ENCODE measurements at regions of chr13 and their contacts with region 1.

Region 1: GRCh38 chr13:23667750-23668149 is 97.5 kb downstream of the TNFRSF19 start:
- DNase-seq: peak in 1 of 2 experiments; percentile 59
- H3K4me3 ChIP-seq: no peak overlapping the region
- H3K27ac ChIP-seq: no peak overlapping the region
- H3K4me1 ChIP-seq: no peaks in the 10 kb centered on the region
- H3K27me3 ChIP-seq: no peaks in the 10 kb centered on the region
- CTCF ChIP-seq: peak; percentile 50 to 65 (median 59)
- EP300 ChIP-seq: no peak
- POLR2A ChIP-seq: no peak
- RAD21 ChIP-seq: peak; percentile 57 to 69

Region 2: GRCh38 chr13:23609414-23609760 is 58.4 kb before region 1 on chr13:
- CTCF ChIA-PET with region 1: no interaction called
- POLR2A ChIA-PET with region 1: no interaction called
- DNase-seq: no peak
- H3K4me3 ChIP-seq: no peak overlapping the region
- H3K27ac ChIP-seq: no peak overlapping the region
- H3K4me1 ChIP-seq: peaks cover 0 to 5% (median 2%) of the 10 kb centered on the region in 4 experiments; a peak in 3 of 7 replicates
- H3K27me3 ChIP-seq: no peaks in the 10 kb centered on the region
- CTCF ChIP-seq: no peak
- EP300 ChIP-seq: no peak
- POLR2A ChIP-seq: no peak
- RAD21 ChIP-seq: no peak

Region 3: DNA sequence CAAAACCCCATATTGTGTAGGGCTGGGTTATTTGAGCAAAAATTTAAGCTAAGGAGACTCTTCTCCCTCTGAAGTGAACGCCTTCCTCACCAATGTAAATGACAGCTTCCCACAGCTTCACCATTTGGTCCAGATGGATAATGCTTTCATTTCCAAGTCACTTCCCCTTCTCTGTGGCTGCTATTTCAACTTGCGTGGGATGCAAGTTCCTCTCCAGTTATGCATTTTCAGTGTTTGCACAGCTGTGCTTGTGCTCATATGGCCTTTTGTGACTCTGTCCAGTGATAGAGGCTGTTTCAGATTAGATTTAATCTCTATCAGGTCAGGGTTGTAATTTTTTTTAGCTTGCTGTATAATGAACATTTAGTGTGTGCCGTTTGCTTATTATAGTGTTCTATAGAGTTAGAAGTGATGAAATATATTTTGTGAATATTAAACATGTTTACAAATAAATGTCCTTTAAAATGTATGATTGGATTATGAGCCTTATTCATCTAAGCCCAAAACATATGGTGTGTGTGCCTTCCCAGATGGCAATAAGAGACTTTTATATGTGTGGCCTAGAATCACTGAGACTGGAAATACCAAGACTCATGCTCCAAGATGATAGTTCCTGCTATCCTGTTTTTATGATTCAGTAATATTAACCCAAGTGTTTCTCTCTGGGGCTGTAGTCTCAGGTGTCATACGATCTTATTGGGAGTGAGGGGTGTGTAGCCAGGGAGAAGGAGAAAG is 10.9 kb before region 1 on chr13:
- CTCF ChIA-PET with region 1: interaction called, 19 read pairs
- POLR2A ChIA-PET with region 1: interaction called, 5 read pairs
- DNase-seq: no peak
- H3K4me3 ChIP-seq: no peak overlapping the region
- H3K27ac ChIP-seq: no peak overlapping the region
- H3K4me1 ChIP-seq: peaks cover 0 to 21% (median 10%) of the 10 kb centered on the region in 4 experiments; a peak in 3 of 7 replicates
- H3K27me3 ChIP-seq: no peaks in the 10 kb centered on the region
- CTCF ChIP-seq: no peak
- EP300 ChIP-seq: no peak
- POLR2A ChIP-seq: no peak
- RAD21 ChIP-seq: no peak

Region 4: DNA sequence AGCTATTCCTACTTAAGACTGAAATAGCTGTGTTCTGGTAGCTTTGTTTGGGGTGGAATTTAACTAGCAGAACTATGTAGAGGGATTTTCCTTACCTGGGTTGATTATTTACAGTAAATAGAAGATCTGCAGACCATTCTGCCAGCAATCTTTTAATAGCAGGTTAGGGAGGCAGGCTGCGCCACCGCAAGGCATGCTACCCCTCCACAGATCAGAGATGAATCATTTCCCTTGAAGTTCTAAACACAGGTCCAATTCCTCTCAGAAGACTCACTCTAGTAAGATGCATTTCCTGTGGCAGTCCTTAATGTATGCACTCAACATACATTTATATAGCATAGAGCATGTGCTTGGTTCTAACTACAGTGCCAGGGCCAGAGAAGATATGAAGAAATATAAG is 11.5 kb after region 1 on chr13:
- CTCF ChIA-PET with region 1: interaction called, 31 read pairs
- POLR2A ChIA-PET with region 1: no interaction called
- DNase-seq: no peak
- H3K4me3 ChIP-seq: no peak overlapping the region
- H3K27ac ChIP-seq: no peak overlapping the region
- H3K4me1 ChIP-seq: peaks cover 0 to 4% (median under 1%) of the 10 kb centered on the region in 4 experiments; a peak in 2 of 7 replicates
- H3K27me3 ChIP-seq: no peaks in the 10 kb centered on the region
- CTCF ChIP-seq: no peak
- EP300 ChIP-seq: no peak
- POLR2A ChIP-seq: no peak
- RAD21 ChIP-seq: no peak

Region 5: DNA sequence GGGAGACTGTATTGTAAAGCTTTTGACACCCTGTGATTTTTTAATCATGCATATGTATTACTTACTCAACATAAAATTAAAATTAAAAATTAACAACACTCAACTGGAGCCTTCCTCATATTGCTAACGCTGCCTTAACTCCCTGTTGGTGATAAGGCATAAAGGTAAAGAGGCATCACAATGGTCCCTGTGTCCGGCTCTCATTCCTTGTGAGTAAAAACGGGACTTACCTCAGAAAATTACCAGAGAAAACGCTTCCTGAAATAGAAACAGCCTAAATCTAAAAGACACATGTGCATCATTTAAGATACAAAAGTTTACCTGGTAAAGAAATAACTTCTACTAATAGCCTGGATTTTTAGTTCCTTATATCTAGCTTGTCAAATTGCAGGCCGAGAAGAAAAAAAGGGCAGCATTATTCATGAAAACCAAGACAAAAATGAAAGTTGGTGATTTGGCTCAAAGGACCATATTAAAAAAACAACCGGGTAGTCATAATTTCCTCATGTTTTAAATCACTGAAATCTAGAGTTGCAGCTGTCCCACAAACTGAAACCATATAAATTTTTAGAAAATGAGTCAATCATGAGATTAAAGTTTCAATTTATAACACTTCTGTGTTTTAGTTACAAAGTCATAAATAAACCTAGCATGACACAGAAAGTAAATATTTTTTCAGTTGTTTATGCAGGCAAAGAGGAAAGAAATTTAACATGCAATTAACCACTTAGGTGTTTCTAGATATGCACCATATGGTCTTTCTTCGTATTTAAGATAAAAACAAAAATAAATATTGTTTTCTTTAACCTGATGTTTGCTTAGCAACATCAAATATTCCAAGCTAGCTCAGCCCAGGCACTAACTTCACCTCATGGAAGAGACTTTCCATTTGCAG is 126.8 kb after region 1 on chr13:
- CTCF ChIA-PET with region 1: no interaction called
- POLR2A ChIA-PET with region 1: no interaction called
- DNase-seq: no peak
- H3K4me3 ChIP-seq: no peak overlapping the region
- H3K27ac ChIP-seq: no peak overlapping the region
- H3K4me1 ChIP-seq: peaks cover 0 to 3% (median 0%) of the 10 kb centered on the region in 4 experiments; a peak in 1 of 7 replicates
- H3K27me3 ChIP-seq: no peaks in the 10 kb centered on the region
- CTCF ChIP-seq: no peak
- EP300 ChIP-seq: no peak
- POLR2A ChIP-seq: no peak
- RAD21 ChIP-seq: no peak

Measured in H1 (cell line).